Naive thymus-derived CD4-positive, alpha-beta T cell (primary cell): ENCODE measurements at regions of chr6 and their contacts with region 1.

Region 1: DNA sequence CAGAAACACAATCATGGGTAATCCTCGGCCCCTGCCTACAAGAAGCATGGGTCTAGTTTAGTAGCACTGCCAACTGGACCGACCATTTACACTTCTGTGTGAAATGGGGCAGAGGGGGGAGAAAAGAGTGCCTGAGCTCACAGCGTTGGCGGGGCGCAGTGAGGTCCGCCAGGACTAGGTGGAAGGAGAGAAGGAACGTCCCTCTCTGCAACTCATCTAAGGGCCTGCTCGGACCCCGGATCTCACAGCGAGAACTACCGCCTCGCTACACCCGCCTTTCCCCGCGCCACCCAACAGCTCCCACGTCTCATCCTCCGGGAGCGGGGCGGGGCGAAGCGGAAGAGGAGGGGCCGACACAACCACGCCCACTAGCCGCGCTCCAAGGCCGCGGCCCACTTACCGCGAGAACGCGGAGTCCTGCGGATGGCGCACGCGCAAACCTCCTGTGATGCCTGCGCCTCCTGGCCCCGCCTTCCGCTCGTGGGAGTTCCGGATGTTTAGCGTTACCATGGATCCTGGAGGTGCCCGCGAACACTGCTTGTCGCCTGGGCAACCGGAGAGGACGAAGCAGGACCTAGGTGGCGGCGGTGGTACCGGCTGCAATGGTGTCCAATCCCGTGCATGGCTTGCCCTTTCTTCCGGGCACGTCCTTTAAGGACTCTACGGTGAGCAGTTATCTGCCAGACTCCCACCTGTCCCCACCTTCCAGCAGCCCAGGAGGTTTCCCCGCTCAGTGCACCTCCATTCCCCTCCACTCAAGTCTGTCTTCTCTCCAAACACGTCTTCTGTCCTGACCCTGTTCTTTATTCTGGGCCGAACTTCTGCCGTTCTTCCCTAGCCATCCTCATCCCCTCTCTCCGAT is at the start of gene EFHC1:
- DNase-seq: peak; percentile 95 to 98 (median 97)
- ATAC-seq: peak; percentile 97
- H3K4me3 ChIP-seq: peak within 1 kb of the TSS; percentile 73
- H3K4me3 Mint-ChIP-seq: no peak within 1 kb of the TSS
- H3K27ac ChIP-seq: peak within 1 kb of the TSS; percentile 72
- H3K27ac Mint-ChIP-seq: peak within 1 kb of the TSS in 1 of 9 donors; percentile 96
- H3K4me1 ChIP-seq: peaks cover 13 to 19% of the 10 kb centered on the region in 2 donors
- H3K4me1 Mint-ChIP-seq: peaks cover 10 to 31% (median 24%) of the 10 kb centered on the region in 7 donors
- H3K27me3 ChIP-seq: no peaks in the 10 kb centered on the region
- H3K27me3 Mint-ChIP-seq: peaks cover 0 to 5% (median 0%) of the 10 kb centered on the region in 5 donors
- total RNA-seq, gene EFHC1: 2.4 to 13.8 (median 6.0) TPM

Region 2: DNA sequence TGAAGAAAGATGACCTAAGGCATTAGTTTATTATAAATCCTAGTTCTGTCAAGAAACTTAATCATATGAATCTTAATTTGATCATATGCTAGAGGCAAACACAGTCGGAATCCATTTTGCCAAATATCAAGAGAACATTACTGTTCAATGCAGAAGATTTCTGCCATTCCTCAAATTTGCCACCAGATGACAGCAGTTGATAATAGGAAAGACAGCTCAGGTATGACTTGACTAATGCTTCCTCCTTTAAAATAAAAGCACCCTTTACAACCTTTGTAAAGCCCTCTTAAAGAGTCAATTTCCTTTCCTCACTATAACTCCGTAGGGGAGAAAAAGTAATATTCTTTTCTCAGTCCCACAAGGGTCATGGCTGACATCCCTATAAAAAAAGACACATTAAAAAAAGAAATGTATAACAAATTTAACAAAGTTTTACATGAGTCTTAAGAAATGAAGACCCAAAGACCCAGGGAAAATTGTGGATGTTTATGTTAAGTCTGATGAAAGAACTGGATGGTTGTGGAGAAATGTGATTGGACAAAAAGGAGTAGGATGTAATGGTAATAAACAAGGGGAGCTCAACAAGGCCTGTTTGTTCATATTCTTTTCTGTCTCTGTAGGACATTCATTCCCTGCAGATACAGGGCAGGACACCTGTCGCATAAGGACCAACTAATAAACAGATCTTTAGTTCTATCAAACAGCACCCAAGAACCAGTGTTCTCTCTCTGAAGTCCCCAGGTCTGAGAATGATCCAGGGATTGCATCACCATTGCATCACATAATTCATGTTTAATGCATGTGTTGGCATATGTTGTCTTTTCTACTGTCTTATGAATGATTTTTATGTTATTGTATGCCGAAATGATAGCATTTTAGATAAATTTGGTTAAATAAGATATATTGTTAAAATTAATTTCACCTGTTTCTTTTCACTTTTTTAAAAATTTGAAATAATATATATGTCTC is 256.8 kb before region 1 on chr6:
- CTCF ChIA-PET with region 1: no interaction called
- POLR2A ChIA-PET with region 1: no interaction called
- intact Hi-C with region 1: loop called in 1 of 2 experiments (anchors 5 kb)
- DNase-seq: peak in 7 of 9 donors; percentile 5 to 49 (median 37)
- ATAC-seq: peak; percentile 62
- H3K4me3 ChIP-seq: no peak overlapping the region
- H3K4me3 Mint-ChIP-seq: no peak overlapping the region
- H3K27ac ChIP-seq: no peak overlapping the region
- H3K27ac Mint-ChIP-seq: peak overlapping the region in 1 of 9 donors; percentile 19
- H3K4me1 ChIP-seq: no peaks in the 10 kb centered on the region
- H3K4me1 Mint-ChIP-seq: peaks cover 0 to 9% (median 0%) of the 10 kb centered on the region in 7 donors
- H3K27me3 ChIP-seq: no peaks in the 10 kb centered on the region
- H3K27me3 Mint-ChIP-seq: peaks cover 6 to 26% (median 17%) of the 10 kb centered on the region in 5 donors

Region 3: GRCh38 chr6:52491203-52492069 is 71.4 kb after region 1 on chr6:
- CTCF ChIA-PET with region 1: no interaction called
- POLR2A ChIA-PET with region 1: no interaction called
- intact Hi-C with region 1: loop called in 1 of 2 experiments (anchors 5 kb)
- DNase-seq: no peak
- ATAC-seq: no peak
- H3K4me3 ChIP-seq: no peak overlapping the region
- H3K4me3 Mint-ChIP-seq: no peak overlapping the region
- H3K27ac ChIP-seq: no peak overlapping the region
- H3K27ac Mint-ChIP-seq: no peak overlapping the region
- H3K4me1 ChIP-seq: no peaks in the 10 kb centered on the region
- H3K4me1 Mint-ChIP-seq: peaks cover 0 to 37% (median 0%) of the 10 kb centered on the region in 7 donors
- H3K27me3 ChIP-seq: no peaks in the 10 kb centered on the region
- H3K27me3 Mint-ChIP-seq: peaks cover 0 to 10% (median 0%) of the 10 kb centered on the region in 5 donors

Region 4: DNA sequence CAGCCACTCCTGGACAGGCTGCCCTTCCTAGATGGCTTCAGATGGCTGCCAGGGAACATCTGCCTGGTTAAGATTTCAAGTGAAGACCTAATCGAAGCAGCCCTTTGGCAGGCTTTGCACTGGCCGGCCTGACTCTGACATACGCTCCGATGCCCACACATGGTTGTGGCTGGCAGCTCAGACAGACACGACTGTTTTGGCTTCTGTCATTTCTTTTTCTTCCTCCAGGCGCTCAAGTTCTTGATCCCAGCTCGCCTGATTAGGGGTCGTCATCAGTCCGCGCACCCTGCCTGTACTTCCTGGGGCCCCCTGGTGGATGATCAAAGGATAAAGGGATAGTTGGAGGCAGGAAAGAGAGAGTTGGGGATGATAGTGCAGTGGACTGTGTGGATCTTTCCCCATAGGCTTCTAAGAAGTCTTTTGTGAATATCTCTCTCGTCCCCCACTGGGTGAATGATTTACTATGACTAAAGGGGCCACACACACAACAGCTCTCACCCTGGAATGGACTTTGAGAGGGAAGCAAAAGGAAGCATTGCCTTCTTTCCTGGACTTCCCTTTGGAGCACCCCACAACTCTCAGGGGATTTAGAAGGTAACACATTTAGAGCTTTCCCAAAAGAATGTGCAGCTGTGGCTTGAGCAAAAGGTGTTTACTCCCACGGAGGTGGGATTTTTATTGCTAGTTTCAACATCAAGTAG is 178.2 kb after region 1 on chr6:
- CTCF ChIA-PET with region 1: interaction called, 9 read pairs
- POLR2A ChIA-PET with region 1: no interaction called
- intact Hi-C with region 1: loop called (anchors 1 to 5 kb)
- DNase-seq: peak in 2 of 9 donors; percentile 8 to 9
- ATAC-seq: peak; percentile 38
- H3K4me3 ChIP-seq: no peak overlapping the region
- H3K4me3 Mint-ChIP-seq: no peak overlapping the region
- H3K27ac ChIP-seq: no peak overlapping the region
- H3K27ac Mint-ChIP-seq: peak overlapping the region in 1 of 9 donors; percentile 32
- H3K4me1 ChIP-seq: no peaks in the 10 kb centered on the region
- H3K4me1 Mint-ChIP-seq: peaks cover 6 to 23% (median 10%) of the 10 kb centered on the region in 7 donors
- H3K27me3 ChIP-seq: no peaks in the 10 kb centered on the region
- H3K27me3 Mint-ChIP-seq: peaks cover 0 to 9% (median 6%) of the 10 kb centered on the region in 5 donors

Region 5: DNA sequence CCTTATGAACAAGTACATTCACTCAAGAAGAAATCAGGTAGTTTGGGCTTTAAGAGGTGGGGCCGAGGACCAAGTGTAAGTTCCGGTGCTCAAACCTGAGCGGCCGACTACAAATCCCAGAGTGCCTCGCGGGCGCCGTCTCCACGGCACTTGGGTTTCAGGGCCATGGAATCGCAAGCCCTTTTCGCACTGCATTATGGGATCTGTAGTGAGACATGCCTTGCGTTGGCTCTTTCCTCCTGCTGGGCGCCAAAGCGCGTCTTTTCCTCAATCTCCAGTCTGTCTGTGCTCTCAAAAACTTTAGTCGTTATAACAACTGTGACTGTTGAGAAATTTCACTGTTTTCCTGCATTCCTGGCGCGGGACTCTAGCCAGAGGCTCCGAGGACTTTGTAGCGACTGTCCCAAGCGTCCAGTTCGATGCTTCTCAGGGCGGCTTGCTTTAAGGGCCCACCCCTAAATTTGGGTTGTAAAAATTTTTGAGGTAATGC is 644.7 kb after region 1 on chr6:
- CTCF ChIA-PET with region 1: no interaction called
- POLR2A ChIA-PET with region 1: no interaction called
- intact Hi-C with region 1: loop called (anchors 1 kb)
- DNase-seq: peak; percentile 81 to 98 (median 94)
- ATAC-seq: peak; percentile 91
- H3K4me3 ChIP-seq: peak overlapping the region; percentile 95
- H3K4me3 Mint-ChIP-seq: peak overlapping the region; percentile 86 to 100 (median 99)
- H3K27ac ChIP-seq: peak overlapping the region; percentile 78
- H3K27ac Mint-ChIP-seq: peak overlapping the region; percentile 90 to 99 (median 97)
- H3K4me1 ChIP-seq: peaks cover 22% of the 10 kb centered on the region in 2 donors
- H3K4me1 Mint-ChIP-seq: peaks cover 36 to 68% (median 56%) of the 10 kb centered on the region in 7 donors
- H3K27me3 ChIP-seq: no peaks in the 10 kb centered on the region
- H3K27me3 Mint-ChIP-seq: no peaks in the 10 kb centered on the region